Activated CD4-positive, alpha-beta memory T cell treated with anti-CD3 and anti-CD28 coated beads, Interleukin-2, amount 10 ng/mL, durations not matched to agents 7 days and 5 days (primary cell): ENCODE measurements at regions of chr14 and their contacts with region 1.

Region 1: DNA sequence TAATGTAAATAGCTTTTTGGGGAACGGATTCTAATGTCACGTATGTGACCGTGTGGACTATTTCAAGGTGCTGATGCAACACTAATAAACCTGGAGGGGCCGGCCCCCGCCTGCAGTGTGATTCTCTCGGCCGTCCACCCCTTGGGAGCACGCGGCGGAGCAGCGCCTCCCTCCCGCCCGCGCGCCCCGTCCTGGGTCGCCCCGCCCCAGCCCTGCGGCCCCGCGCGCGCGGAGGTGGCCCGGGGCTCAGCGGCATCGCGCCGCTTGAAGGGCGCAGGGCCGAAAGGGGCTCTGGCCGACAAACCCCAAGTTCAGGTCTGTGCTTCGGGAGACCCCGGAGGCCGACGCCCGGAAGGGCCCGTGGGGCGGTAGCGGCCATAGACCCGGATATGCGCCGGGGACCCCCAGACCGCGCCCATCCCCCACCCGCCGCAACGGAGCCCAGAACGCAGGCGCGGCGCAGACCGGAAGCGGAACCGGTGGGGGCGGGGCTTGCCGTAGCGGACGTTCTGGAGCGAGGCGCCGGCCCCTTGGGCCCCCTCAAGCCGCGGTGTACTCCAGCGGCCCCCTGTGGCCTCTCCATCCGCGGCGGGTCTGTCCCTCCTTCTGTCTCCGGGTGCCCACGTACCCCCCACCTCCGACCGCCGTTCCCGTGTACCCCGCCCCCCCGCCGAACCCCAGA is at the start of gene TEX22:
- DNase-seq: peak; percentile 89
- H3K4me3 Mint-ChIP-seq: peak within 1 kb of the TSS; percentile 89
- H3K27ac Mint-ChIP-seq: peak within 1 kb of the TSS; percentile 82
- H3K4me1 Mint-ChIP-seq: peaks cover 23% of the 10 kb centered on the region
- H3K27me3 Mint-ChIP-seq: no peaks in the 10 kb centered on the region
- total RNA-seq, gene TEX22: 2.6 to 4.4 TPM

Region 2: DNA sequence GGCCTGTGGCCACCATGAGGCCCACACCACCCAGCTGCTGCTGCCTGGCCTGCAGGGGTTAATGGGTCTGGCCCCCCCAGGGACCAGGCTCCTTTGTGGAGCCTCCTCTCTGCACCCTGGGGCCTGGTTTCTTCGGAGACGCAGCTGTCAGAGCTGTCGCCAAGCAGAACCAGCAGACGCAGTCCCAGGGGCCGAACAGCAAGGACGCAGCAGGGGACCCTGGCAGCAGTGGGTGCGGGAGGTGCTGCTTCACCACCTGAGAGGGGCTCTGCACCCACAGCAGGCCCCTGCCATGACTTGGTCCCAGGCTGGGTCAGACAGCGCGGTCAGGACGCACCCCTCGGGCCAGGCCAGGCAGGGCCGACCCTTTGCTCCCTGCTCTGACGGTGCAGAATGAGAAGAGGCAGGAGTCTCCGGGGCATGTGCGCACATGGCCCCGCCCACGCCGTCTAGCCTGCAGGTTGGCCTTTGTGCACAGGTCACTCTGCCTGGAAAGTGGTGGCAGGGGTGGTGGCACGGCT is 260.1 kb before region 1 on chr14:
- CTCF ChIA-PET with region 1: no interaction called
- POLR2A ChIA-PET with region 1: no interaction called
- DNase-seq: no peak
- H3K4me3 Mint-ChIP-seq: no peak overlapping the region
- H3K27ac Mint-ChIP-seq: no peak overlapping the region
- H3K4me1 Mint-ChIP-seq: no peaks in the 10 kb centered on the region
- H3K27me3 Mint-ChIP-seq: peaks cover 13% of the 10 kb centered on the region

Region 3: GRCh38 chr14:105414456-105415371 is 16.5 kb after region 1 on chr14:
- CTCF ChIA-PET with region 1: interaction called, 13 read pairs
- POLR2A ChIA-PET with region 1: interaction called, 9 read pairs
- DNase-seq: peak; percentile 64
- H3K4me3 Mint-ChIP-seq: peak overlapping the region; percentile 58
- H3K27ac Mint-ChIP-seq: no peak overlapping the region
- H3K4me1 Mint-ChIP-seq: peaks cover 7% of the 10 kb centered on the region
- H3K27me3 Mint-ChIP-seq: peaks cover 33% of the 10 kb centered on the region

Region 4: DNA sequence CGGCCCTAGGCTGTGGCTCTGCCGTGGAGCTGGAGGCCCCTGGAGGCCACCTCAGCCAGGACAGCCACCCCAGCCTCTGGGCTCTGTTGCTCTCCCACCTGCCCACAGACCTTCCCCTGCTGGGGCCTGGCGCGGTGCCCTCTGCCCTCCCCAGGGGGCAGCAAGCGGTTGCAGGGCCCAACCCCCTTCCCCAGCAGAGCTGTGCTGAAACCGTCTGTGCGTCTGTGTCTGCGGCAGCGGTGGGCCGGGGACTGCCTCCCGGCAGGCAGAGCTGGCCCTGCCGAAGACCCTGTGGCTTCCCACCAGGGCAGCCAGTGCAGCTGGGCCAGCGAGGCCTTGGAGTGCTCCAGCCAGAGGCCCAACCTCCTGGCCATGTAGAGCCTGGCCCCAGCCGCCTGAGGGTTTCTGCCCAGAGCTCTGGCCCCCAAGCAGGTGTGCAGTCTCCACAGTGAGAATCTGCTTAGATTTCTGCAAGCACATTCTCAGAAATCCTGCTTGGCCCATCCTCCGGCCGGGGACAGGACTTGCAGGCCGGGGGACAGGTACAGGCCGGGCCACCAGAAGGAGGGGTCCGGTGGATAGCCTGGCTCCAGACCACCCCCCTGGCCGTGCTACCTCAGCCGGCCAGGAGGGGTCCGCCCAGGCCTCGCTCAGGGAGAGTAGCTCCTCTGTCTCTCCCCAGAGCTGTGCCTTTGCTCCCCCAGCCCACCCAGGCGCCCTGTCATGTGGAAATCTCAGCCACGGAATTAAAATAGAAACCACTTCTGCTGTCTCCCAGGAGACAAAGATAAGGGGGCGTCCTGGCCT is 72.8 kb after region 1 on chr14:
- CTCF ChIA-PET with region 1: no interaction called
- POLR2A ChIA-PET with region 1: no interaction called
- DNase-seq: no peak
- H3K4me3 Mint-ChIP-seq: no peak overlapping the region
- H3K27ac Mint-ChIP-seq: no peak overlapping the region
- H3K4me1 Mint-ChIP-seq: peaks cover 7% of the 10 kb centered on the region
- H3K27me3 Mint-ChIP-seq: peaks cover 8% of the 10 kb centered on the region